ENCODE measurements at regions of chr10 and their contacts with region 1.

Region 1: GRCh38 chr10:43105102-43105785 is 28.4 kb downstream of the RET start:
- DNase-seq: peak; percentile 75 to 94
- H3K4me3 ChIP-seq: peak overlapping the region; percentile 17 to 64 (median 58)
- H3K27ac ChIP-seq: no peak overlapping the region
- H3K4me1 ChIP-seq: peaks cover 0 to 13% (median 3%) of the 10 kb centered on the region in 4 experiments; a peak in 5 of 7 replicates
- H3K27me3 ChIP-seq: peaks cover 0 to 16% (median 12%) of the 10 kb centered on the region in 4 experiments; a peak in 6 of 7 replicates
- CTCF ChIP-seq: peak in 2 of 3 experiments; percentile 92 to 93; a peak in 3 of 4 replicates
- EP300 ChIP-seq: 0 out of 3 replicates have a peak, but pooled peaks of 1 of the 2 experiments have one; percentile 6
- POLR2A ChIP-seq: 0 out of 3 replicates have a peak, but pooled peaks of 1 of the 2 experiments have one; percentile 34
- RAD21 ChIP-seq: peak; percentile 96 to 98

Region 2: DNA sequence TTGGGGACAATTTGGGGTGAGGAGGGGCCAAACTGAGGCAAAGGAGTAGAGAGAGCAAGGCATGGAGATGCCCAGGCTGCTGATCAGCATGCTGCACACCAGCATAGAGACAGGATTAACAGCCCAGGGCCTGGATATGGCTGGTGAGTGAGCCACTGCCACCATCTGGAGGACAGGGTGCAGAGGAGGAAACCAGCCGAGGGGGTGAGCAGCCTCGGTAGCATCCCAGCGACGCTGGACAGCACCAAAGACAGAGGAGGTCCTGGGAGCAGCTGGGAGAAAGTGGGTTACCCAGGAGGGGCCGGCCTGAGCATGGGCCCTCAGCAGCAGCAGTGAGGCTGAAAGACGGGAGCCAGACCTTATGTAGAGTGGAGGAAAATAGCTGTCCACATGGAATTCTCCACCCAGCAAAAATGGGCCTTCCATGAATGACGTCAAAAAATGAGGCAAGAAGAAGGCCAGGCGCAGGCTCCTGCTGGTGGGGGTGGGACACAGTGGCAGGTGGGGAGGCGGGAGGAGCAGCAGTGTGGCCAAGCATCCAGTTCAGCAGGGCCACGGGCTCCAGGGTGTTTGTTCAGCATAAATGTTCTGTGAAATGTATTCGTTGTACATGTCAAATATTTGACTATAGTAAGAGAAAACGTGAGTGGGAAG is 11.7 kb before region 1 on chr10:
- CTCF ChIA-PET with region 1: interaction called, 14 read pairs
- POLR2A ChIA-PET with region 1: no interaction called
- DNase-seq: no peak
- H3K4me3 ChIP-seq: no peak overlapping the region
- H3K27ac ChIP-seq: no peak overlapping the region
- H3K4me1 ChIP-seq: peaks cover 0 to 6% (median 3%) of the 10 kb centered on the region in 4 experiments; a peak in 2 of 7 replicates
- H3K27me3 ChIP-seq: no peaks in the 10 kb centered on the region; a peak in 1 of 7 replicates
- CTCF ChIP-seq: peak; percentile 21 to 48 (median 43); a peak in 2 of 4 replicates
- EP300 ChIP-seq: no peak
- POLR2A ChIP-seq: no peak
- RAD21 ChIP-seq: peak; percentile 47 to 61; a peak in 3 of 4 replicates